Common myeloid progenitor, CD34-positive (primary cell): ENCODE measurements at regions of chr10 and their contacts with region 1.

Region 1: GRCh38 chr10:119189811-119190282 is 11.2 kb upstream of the PRDX3 start:
- DNase-seq: peak; percentile 75 to 95 (median 94)
- H3K4me3 ChIP-seq: peak overlapping the region in 2 of 7 experiments; percentile 28 to 29
- H3K27ac ChIP-seq: no peak overlapping the region
- H3K4me1 ChIP-seq: peaks cover 5 to 33% (median 29%) of the 10 kb centered on the region in 4 experiments
- H3K27me3 ChIP-seq: no peaks in the 10 kb centered on the region

Region 2: DNA sequence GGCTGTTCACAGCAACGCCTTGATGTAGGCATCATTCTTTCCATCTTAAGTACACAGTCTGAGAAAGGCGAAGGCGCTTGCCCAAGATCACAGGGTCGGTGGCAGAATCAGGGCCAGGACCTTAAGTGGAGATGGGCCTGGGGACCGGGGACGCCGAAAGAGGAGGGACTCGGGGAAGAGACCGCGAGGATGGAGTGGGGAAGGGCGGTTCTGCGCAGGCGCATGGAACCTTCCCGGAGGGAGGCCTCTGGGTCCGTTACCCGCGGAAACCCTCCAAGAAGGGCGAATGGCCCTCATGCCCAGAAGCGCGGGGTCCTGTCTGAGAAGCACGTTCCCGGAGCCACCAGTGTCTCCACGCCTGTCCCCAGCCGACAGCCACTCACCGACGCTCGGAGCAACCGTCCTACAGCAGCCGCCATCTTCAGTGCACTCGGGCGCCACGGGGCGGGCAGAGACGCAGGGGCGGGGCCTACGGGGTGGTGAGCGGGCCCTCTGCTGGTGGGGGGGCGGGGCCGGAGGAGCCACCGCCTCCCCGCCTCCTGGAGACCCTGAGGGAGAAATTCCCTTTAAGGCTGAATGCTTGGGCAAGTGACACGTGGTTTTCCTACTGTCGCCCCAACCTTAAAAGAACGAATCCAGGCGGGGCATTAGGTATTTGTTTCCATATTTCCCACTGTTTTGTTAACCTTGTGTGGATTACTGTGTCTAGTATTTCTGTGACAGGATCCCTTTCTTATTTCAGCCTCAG is 11.3 kb before region 1 on chr10 and contains the start of gene PRDX3:
- CTCF ChIA-PET with region 1: interaction called, 11 read pairs
- POLR2A ChIA-PET with region 1: interaction called, 3 read pairs
- DNase-seq: peak; percentile 87 to 92 (median 91)
- H3K4me3 ChIP-seq: peak within 1 kb of the TSS; percentile 61 to 98 (median 86)
- H3K27ac ChIP-seq: peak within 1 kb of the TSS; percentile 79 to 89
- H3K4me1 ChIP-seq: peaks cover 5 to 24% (median 18%) of the 10 kb centered on the region in 4 experiments
- H3K27me3 ChIP-seq: no peaks in the 10 kb centered on the region